ENCODE measurements at regions of chr5 and their contacts with region 1.

Region 1: GRCh38 chr5:140700177-140701144 is at the start of gene ZMAT2:
- DNase-seq: peak; percentile 97
- H3K4me3 ChIP-seq: peak within 1 kb of the TSS; percentile 66 to 92 (median 86)
- H3K27ac ChIP-seq: peak within 1 kb of the TSS; percentile 68 to 90 (median 80)
- H3K4me1 ChIP-seq: peaks cover 10 to 38% (median 29%) of the 10 kb centered on the region in 6 donors
- H3K27me3 ChIP-seq: no peaks in the 10 kb centered on the region
- CTCF ChIP-seq: peak in 1 of 11 experiments; percentile 8
- POLR2A ChIP-seq: peak in 2 of 3 donors; percentile 12 to 80
- total RNA-seq, gene ZMAT2: 34.4 to 52.3 (median 43.1) TPM

Region 2: GRCh38 chr5:140658870-140659269 is 41.6 kb before region 1 on chr5:
- intact Hi-C with region 1: loop called (anchors 10 kb)
- DNase-seq: no peak
- H3K4me3 ChIP-seq: no peak overlapping the region
- H3K27ac ChIP-seq: no peak overlapping the region
- H3K4me1 ChIP-seq: peaks cover 0 to 15% (median 4%) of the 10 kb centered on the region in 6 donors
- H3K27me3 ChIP-seq: no peaks in the 10 kb centered on the region
- CTCF ChIP-seq: no peak
- POLR2A ChIP-seq: no peak